Activated CD4-positive, alpha-beta memory T cell treated with anti-CD3 and anti-CD28 coated beads for 36 hours (primary cell): ENCODE measurements at regions of chr18 and their contacts with region 1.

Region 1: DNA sequence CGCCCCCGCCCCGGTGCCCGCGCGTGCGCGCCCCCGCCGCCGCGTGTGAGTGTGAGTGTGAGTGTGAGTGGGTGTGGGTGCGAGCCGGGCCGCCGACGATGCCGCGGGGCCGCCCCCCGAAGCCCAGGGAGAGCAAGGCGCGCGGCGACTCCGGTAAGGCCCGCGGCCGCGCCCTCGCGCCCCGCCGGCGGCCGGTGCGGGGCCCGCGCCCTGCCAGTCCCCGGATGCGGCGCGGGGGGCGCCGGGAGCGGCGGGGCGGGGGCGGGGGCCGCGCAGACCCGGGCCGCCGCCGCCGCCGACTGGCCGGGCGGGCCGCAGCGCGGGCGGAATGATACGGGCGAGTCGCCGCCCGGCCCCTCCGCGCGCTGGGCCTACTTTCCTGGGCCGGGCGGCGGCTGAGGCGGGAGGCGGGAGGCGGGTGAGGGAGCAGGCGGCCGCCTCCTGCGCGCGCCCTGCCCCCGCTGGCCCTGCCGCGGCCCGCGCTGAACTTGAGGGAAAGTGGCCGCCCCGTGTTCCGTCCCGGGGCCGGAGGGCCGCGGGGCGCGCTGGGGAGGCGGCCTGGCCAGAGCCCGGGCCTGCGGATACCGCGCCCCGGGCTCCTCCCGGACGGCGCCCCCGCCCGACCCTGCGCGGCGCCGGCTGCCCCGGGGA is at the start of gene ZNF236:
- DNase-seq: peak; percentile 72
- H3K4me3 Mint-ChIP-seq: peak within 1 kb of the TSS; percentile 89
- H3K27ac Mint-ChIP-seq: peak within 1 kb of the TSS; percentile 87
- H3K4me1 Mint-ChIP-seq: peaks cover 51% of the 10 kb centered on the region
- H3K27me3 Mint-ChIP-seq: no peaks in the 10 kb centered on the region
- total RNA-seq, gene ZNF236: 14.4 to 15.6 TPM

Region 2: DNA sequence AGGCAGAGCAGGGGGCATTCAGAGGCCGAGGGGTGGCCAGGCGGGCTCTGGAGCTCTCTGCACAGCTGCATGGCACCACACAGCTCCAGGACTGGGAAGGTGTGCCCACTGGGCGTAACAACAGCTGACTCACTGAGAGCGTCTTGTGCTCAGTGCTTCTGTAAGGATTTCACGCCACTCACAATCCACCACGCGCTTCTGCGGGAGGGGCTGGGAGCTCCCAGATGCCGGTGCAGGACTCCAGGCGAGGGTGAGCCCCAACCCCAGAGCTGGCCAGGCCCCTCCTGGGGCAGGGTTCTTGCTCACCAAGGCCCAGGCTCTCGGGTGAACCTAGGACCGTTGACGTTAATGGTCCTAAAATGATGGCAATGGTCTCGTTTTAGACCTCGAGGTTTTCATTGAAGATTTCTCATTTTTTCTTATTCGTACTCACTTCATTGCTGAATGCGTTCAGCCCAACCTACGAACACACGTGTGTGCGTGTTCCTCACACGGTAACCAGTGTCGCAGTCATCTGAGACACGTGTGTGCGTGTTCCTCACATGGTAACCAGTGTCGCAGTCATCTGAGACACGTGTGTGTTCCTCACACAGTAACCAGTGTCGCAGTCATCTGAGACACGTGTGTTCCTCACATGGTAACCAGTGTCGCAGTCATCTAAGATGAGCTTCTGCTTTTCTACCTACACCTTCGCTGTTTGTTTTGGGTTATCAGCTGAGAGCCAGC is 38.7 kb before region 1 on chr18:
- CTCF ChIA-PET with region 1: no interaction called
- POLR2A ChIA-PET with region 1: no interaction called
- intact Hi-C with region 1: no loop called
- DNase-seq: no peak
- H3K4me3 Mint-ChIP-seq: no peak overlapping the region
- H3K27ac Mint-ChIP-seq: no peak overlapping the region
- H3K4me1 Mint-ChIP-seq: peaks cover 5% of the 10 kb centered on the region
- H3K27me3 Mint-ChIP-seq: peaks cover 12% of the 10 kb centered on the region

Region 3: DNA sequence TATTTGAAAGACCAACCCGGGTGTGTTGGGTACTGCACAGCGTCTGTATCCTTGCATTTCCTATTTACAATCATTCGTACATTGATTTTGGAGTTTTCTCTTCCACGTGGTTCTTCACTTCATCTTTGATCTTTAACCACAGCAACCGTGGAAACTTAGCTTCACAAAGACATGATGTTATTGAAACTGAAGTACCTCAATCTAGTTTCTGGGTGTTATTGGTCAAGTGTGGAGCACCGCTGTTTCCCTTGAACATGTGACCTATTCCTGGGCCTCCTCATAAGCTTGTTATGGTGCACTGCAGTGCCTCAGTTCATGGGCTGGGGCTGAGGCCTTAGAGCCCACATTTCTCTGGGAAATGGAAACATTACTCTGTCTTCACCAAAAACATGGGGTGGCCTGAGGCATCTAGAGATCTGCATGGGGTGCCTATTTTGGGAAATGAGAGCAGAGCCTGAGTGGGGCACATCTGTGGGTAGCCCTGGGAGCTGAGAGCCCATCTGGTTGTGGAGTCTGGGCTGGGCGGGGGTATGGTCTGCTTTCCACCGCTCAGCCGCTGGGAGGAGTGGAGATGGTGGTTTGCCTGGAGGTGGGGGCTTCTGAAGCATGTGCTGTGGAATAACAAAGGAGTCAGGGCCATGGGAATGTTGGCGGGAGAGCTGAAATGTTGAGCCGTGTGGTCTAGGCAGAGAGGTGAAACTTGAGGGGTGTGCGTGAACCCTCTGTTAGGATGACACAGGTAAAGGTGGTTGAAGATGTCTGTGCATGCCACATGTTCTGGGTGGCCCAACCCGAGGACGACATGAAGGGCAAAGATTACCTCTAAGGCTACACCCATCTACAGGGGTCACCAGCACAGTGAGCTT is 37.1 kb after region 1 on chr18:
- CTCF ChIA-PET with region 1: interaction called, 5 read pairs
- POLR2A ChIA-PET with region 1: no interaction called
- intact Hi-C with region 1: loop called (anchors 1 kb)
- DNase-seq: peak; percentile 64
- H3K4me3 Mint-ChIP-seq: no peak overlapping the region
- H3K27ac Mint-ChIP-seq: peak overlapping the region; percentile 68
- H3K4me1 Mint-ChIP-seq: peaks cover 20% of the 10 kb centered on the region
- H3K27me3 Mint-ChIP-seq: no peaks in the 10 kb centered on the region

Region 4: DNA sequence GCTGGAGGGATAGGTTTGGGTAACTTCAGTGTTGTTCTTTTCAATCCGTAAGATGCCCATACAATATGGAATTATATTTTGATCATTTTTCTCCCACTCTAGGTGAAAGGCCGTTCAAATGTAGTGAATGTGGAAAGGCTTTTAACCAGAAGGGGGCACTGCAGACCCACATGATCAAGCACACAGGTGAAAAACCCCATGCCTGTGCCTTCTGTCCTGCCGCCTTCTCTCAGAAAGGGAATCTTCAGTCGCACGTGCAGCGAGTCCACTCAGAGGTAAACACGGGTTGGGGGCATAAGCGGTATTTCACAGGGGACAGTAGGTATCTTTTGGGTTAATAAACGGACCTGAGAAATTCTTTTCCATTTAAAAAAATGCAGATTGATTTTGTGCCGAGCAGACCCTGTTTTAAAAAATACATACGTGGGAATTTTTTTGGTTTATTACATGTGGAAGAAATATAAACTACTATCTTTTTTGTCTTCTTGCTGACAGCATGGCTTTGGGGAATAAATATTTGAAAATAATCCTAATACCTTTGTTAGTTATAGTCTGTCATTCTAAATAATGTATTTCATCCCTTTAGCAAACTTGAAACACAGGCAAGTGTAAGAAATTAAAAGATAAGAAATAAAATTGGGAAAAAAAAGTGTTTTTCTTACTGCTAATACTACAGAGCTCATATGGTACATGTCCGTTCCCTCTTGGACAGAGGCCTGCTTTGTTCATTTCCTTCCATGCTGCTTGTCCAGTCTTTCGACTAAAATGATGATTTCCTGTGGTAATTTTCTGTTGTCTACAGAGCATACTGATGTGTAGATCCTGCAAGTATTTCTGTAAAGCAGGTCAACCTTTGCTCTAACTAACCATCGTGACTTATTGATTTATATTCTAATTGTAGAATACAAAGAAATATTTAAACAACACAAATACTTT is 53.0 kb after region 1 on chr18:
- CTCF ChIA-PET with region 1: interaction called, 3 read pairs
- POLR2A ChIA-PET with region 1: interaction called, 3 read pairs
- intact Hi-C with region 1: loop called (anchors 2 kb)
- DNase-seq: peak; percentile 58
- H3K4me3 Mint-ChIP-seq: no peak overlapping the region
- H3K27ac Mint-ChIP-seq: peak overlapping the region; percentile 83
- H3K4me1 Mint-ChIP-seq: peaks cover 15% of the 10 kb centered on the region
- H3K27me3 Mint-ChIP-seq: no peaks in the 10 kb centered on the region